ENCODE measurements at regions of chr15 and their contacts with region 1.

Region 1: GRCh38 chr15:101127506-101128076 is 124.3 kb downstream of the CHSY1 start:
- DNase-seq: peak; percentile 61
- ATAC-seq: peak; percentile 73
- H3K4me3 Mint-ChIP-seq: peak overlapping the region; percentile 69
- H3K27ac Mint-ChIP-seq: peak overlapping the region; percentile 98
- H3K4me1 Mint-ChIP-seq: peaks cover 74% of the 10 kb centered on the region
- H3K27me3 Mint-ChIP-seq: no peaks in the 10 kb centered on the region

Region 2: DNA sequence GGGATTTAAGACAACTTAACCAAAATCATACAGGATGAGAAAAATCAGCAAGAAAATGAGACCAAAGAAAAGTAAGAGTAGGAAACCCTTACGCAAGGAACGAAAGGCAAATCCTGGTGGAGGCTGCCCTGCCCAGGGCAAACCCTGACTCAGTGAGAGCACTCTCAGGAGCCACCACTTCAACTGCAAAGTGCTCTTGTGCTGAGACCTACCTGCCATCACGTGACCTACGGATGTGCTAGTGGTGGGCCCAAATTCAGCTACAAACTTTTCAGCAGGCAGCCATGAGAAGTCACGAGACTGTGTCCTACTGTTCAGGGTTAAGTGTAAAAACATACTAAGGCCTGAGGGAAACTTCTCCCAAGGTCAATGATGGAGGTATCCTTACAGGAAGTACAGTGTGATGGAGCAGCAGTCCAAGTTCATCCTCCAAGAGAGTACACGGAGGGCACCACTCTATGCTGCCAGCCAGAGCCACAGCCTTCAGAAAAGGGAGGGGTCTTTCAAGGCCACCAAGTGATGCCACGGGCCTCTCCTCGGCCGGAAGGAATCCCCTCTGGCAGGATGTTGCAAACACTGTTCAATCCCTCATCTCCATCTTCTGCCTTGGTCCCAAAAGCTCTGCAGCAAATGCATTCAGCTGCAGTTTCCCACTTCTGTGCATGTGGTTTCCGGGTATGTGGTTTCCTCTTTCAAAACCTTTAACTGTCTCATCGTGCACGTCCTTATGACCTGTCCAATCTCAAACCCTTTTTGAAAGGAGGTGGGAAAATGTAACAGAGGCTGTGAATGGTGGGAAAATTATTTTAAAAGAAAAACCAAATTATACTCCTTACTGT is 114.8 kb after region 1 on chr15:
- CTCF ChIA-PET with region 1: interaction called, 8 read pairs
- POLR2A ChIA-PET with region 1: interaction called, 12 read pairs
- DNase-seq: peak; percentile 87
- ATAC-seq: peak; percentile 83
- H3K4me3 Mint-ChIP-seq: peak overlapping the region; percentile 65
- H3K27ac Mint-ChIP-seq: peak overlapping the region; percentile 88
- H3K4me1 Mint-ChIP-seq: peaks cover 91% of the 10 kb centered on the region
- H3K27me3 Mint-ChIP-seq: no peaks in the 10 kb centered on the region

Measured in activated CD8-positive, alpha-beta T cell treated with anti-CD3 and anti-CD28 coated beads, Interleukin-2, amount 10 ng/mL, durations not matched to agents 7 days and 5 days (primary cell).